ENCODE measurements at regions of chr1 and their contacts with region 1.

Region 1: DNA sequence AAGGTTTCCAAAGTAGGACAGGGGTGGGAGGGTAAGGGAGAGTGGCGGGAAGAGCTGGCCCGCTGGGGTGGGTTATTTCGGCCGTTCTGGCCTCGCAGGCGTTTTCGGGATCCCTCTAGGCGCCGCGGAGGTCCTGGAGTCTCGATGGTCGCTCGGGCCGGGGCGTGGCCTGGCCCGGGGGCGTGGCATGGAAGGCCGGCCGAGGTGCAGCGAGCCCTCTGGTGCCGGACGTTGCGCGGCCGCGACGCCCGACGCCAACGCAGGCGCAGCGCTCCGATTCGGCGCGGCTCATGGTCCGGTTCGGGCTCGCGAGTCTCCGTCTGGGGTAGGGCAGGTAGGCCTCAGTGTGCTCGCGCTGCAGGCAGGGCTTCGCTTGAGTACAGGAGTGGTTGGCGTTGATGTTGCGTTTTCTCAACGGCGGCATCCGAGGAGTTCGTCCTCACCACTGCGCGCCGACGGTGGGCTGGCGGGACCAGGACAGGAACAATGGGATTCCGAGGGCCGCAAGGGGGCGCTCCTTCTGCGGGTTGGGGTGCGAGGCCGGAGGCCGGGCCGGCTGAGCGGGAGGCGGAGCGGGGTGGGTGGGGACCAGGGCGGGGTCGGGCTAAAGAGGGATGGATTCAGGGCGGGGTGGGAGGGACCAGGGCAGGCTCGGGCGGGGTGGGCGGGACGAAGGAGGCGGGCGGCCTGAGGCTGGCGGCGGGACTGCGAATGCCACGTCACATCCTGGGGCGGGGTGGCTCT is at the start of gene PGBD2:
- DNase-seq: peak; percentile 96
- ATAC-seq: peak; percentile 86
- H3K4me3 ChIP-seq: peak within 1 kb of the TSS; percentile 81
- H3K27ac ChIP-seq: peak within 1 kb of the TSS; percentile 46; the same call in 1 of the 2 replicates
- H3K4me1 ChIP-seq: peaks cover 12% of the 10 kb centered on the region; the same call in 1 of the 2 replicates
- H3K27me3 ChIP-seq: peaks cover 4% of the 10 kb centered on the region; the same call in 1 of the 2 replicates
- CTCF ChIP-seq: peak; percentile 85
- total RNA-seq, gene PGBD2: 6.5 and 9.2 TPM in 2 replicates

Region 2: DNA sequence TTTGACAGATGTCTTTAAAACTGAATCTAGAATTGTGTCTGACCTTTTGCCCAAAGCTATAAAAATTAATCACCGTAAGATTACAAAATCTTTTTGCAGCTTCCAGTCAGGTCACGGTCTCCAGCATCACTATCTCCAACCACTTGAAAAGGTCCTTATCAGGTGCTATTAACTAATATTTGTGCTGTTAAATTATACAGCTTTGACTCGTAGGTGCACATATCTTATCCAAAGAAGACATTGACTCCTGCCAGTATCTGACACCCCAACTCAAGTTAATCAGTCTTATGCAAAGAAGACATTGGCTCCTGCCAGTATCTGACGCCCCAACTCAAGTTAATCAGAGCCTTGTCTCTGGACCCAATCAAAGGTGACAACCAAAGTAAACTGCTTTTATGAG is 130.7 kb before region 1 on chr1:
- CTCF ChIA-PET with region 1: no interaction called
- POLR2A ChIA-PET with region 1: no interaction called
- intact Hi-C with region 1: no loop called
- DNase-seq: no peak
- ATAC-seq: no peak
- H3K4me3 ChIP-seq: no peak overlapping the region
- H3K27ac ChIP-seq: no peak overlapping the region
- H3K4me1 ChIP-seq: no peaks in the 10 kb centered on the region
- H3K27me3 ChIP-seq: peaks cover 26% of the 10 kb centered on the region
- CTCF ChIP-seq: no peak

Region 3: DNA sequence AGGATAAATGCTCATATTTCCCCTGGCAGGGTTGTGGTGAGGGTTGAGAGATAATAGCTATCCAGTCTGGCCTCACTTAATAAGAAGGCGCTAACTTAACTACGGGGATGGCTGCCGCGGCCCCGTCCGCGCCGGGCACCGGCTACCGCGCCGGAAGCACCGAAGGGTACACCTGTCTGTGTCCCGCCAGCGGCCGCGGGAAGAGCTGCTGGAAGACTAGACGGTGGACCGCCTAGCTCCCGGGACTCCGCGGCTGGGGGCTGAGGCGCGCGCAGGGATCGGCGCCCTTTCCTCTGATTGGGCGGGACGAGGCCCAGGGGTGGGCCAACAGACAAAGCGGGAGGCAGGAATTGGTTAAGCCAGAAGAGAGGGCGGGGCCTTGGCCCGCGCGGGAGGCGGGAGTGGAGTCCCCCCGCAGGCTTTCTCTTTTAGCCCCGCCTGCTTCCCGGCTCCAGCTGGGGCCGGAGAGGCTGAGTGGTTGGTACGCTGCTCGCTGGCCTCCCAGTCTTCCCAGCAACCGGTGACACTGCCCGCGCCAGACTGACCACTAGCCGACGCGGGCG is 68.3 kb before region 1 on chr1 and contains the start of gene ZNF672:
- CTCF ChIA-PET with region 1: interaction called, 4 read pairs
- POLR2A ChIA-PET with region 1: interaction called, 17 read pairs
- intact Hi-C with region 1: no loop called
- DNase-seq: peak; percentile 100
- ATAC-seq: peak; percentile 84
- H3K4me3 ChIP-seq: peak within 1 kb of the TSS; percentile 77
- H3K27ac ChIP-seq: peak within 1 kb of the TSS; percentile 75
- H3K4me1 ChIP-seq: peaks cover 20% of the 10 kb centered on the region
- H3K27me3 ChIP-seq: no peaks in the 10 kb centered on the region
- CTCF ChIP-seq: no peak
- total RNA-seq, gene ZNF672: 83.9 and 89.4 TPM in 2 replicates

Region 4: GRCh38 chr1:248858891-248859889 is 47.0 kb before region 1 on chr1 and contains the start of gene ZNF692:
- CTCF ChIA-PET with region 1: no interaction called
- POLR2A ChIA-PET with region 1: no interaction called
- intact Hi-C with region 1: loop called (anchors 1 kb)
- DNase-seq: peak; percentile 100
- ATAC-seq: peak; percentile 78
- H3K4me3 ChIP-seq: peak within 1 kb of the TSS; percentile 75
- H3K27ac ChIP-seq: peak within 1 kb of the TSS; percentile 58
- H3K4me1 ChIP-seq: peaks cover 37% of the 10 kb centered on the region
- H3K27me3 ChIP-seq: no peaks in the 10 kb centered on the region
- CTCF ChIP-seq: no peak
- total RNA-seq, gene ZNF692: 71.9 and 85.4 TPM in 2 replicates

Region 5: GRCh38 chr1:248873409-248873992 is 32.7 kb before region 1 on chr1:
- CTCF ChIA-PET with region 1: no interaction called
- POLR2A ChIA-PET with region 1: no interaction called
- intact Hi-C with region 1: loop called (anchors 2 kb)
- DNase-seq: peak; percentile 100
- ATAC-seq: peak; percentile 84
- H3K4me3 ChIP-seq: peak overlapping the region; percentile 75
- H3K27ac ChIP-seq: peak overlapping the region; percentile 47
- H3K4me1 ChIP-seq: peaks cover 9% of the 10 kb centered on the region; the same call in 1 of the 2 replicates
- H3K27me3 ChIP-seq: no peaks in the 10 kb centered on the region
- CTCF ChIP-seq: 0 out of 2 replicates have a peak, but pooled peaks have one; percentile 26

Region 6: DNA sequence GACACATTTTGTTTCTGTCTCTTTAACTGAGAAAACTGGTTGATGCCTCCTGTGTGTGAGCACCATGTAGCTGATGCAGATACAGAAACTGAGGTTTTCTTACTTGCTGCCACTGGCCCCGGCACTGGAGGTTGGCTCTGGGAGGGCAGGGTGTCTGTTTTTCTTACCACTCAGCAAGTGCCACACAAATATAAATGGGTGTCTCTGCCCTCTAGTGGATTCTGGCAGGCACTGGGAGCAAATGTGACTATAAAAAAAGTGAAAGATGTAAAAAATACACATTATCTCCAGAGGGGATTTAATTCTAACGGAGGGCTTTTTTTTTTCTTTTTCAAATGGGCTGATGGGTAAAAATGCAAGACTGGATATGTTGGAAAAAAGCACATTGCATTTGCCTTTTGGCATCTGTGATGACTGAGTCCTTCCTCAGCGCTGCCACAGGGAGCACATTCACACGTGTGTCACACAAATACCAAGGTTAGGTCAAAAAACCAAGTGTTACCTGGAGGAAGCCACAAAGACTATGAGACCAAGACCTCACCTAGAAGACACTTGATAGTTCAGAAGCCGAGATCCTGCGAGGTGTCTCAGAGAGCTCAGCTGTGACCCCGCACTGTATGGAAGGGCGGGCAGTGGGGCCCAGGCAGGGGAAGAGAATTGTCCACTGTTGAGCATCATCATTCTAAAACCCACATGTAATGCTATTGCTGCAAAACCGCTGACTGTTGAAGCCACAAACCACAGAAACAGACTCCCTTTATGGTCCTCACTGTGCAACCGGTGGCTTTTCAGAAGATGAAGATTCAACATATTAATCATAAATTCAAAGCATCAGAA is 18.7 kb after region 1 on chr1:
- CTCF ChIA-PET with region 1: no interaction called
- POLR2A ChIA-PET with region 1: no interaction called
- intact Hi-C with region 1: loop called (anchors 1 kb)
- DNase-seq: peak; percentile 77
- ATAC-seq: peak; percentile 97
- H3K4me3 ChIP-seq: no peak overlapping the region
- H3K27ac ChIP-seq: peak overlapping the region; percentile 89; the same call in 1 of the 2 replicates
- H3K4me1 ChIP-seq: peaks cover 29% of the 10 kb centered on the region
- H3K27me3 ChIP-seq: no peaks in the 10 kb centered on the region
- CTCF ChIP-seq: peak; percentile 92

Measured in PC-3 (cell line).